ENCODE measurements at regions of chr5 and their contacts with region 1.

Region 1: GRCh38 chr5:173823711-173824528 is 64.2 kb upstream of the CPEB4 start:
- DNase-seq: no peak
- ATAC-seq: no peak
- H3K4me3 ChIP-seq: no peak overlapping the region
- H3K27ac ChIP-seq: peak overlapping the region; percentile 60 to 79
- H3K4me1 ChIP-seq: no peaks in the 10 kb centered on the region
- H3K27me3 ChIP-seq: no peaks in the 10 kb centered on the region

Region 2: GRCh38 chr5:173764321-173765029 is 59.4 kb before region 1 on chr5:
- intact Hi-C with region 1: loop called in 1 of 2 experiments (anchors 10 kb)
- DNase-seq: peak; percentile 92
- ATAC-seq: peak; percentile 74
- H3K4me3 ChIP-seq: no peak overlapping the region
- H3K27ac ChIP-seq: no peak overlapping the region
- H3K4me1 ChIP-seq: peaks cover 0 to 3% of the 10 kb centered on the region in 2 donors
- H3K27me3 ChIP-seq: no peaks in the 10 kb centered on the region